Activated CD4-positive, alpha-beta T cell treated with anti-CD3 and anti-CD28 coated beads for 36 hours (primary cell): ENCODE measurements at regions of chr3 and their contacts with region 1.

Region 1: GRCh38 chr3:101573449-101574387 is at the start of gene PCNP:
- DNase-seq: peak; percentile 100
- ATAC-seq: peak; percentile 78
- H3K4me3 Mint-ChIP-seq: peak within 1 kb of the TSS; percentile 85
- H3K27ac Mint-ChIP-seq: peak within 1 kb of the TSS; percentile 94
- H3K4me1 Mint-ChIP-seq: peaks cover 60% of the 10 kb centered on the region
- H3K27me3 Mint-ChIP-seq: no peaks in the 10 kb centered on the region
- total RNA-seq, gene PCNP: 213 to 264 TPM

Region 2: GRCh38 chr3:100708967-100709841 is 864.5 kb before region 1 on chr3 and contains the start of gene TFG:
- CTCF ChIA-PET with region 1: no interaction called
- POLR2A ChIA-PET with region 1: interaction called, 3 read pairs
- intact Hi-C with region 1: loop called in 1 of 2 experiments (anchors 1 kb)
- DNase-seq: peak; percentile 98
- ATAC-seq: peak; percentile 91
- H3K4me3 Mint-ChIP-seq: peak within 1 kb of the TSS; percentile 79
- H3K27ac Mint-ChIP-seq: peak within 1 kb of the TSS; percentile 98
- H3K4me1 Mint-ChIP-seq: peaks cover 45% of the 10 kb centered on the region
- H3K27me3 Mint-ChIP-seq: no peaks in the 10 kb centered on the region
- total RNA-seq, gene TFG: 61.4 to 79.8 TPM

Region 3: DNA sequence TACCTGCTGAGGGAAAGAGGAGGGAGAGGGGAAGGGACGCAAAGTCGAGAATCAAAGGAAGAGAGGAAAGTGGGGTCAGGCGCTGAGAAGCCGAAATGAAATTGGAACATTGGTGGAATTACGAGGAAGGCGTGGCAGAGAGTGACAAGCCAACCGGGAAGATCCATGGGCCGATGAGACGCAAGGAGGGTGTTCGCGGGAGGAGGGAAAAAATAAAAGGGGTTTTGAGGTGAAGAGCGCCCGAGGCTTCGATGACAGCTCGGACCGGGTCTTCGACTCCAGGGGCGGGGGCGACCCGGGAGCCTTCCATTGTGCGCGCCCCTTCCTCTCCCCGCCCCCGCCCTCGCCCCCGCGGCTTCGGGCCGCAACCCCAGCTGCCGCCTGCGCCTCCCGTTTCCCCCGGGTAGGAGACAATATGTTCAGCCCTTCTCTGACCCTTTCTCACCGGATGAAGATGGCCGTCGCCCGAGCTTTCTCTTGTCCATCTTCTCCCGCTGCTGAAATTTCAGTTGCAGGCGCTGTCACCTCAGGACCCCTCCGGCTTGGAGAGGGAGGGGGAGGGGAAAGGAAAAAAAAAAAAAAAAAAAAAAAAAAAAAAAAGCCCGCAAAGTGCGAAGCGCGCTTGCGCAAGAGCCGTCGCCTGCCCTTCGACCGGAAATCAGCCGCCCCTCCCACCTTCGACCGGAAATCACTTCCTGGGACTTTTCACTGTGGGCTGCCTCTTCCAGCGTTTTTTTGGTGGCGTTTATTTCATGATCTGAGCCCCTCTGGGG is 60.9 kb before region 1 on chr3 and contains the start of gene SENP7:
- CTCF ChIA-PET with region 1: interaction called, 4 read pairs
- POLR2A ChIA-PET with region 1: interaction called, 6 read pairs
- intact Hi-C with region 1: loop called (anchors 1 kb)
- DNase-seq: peak; percentile 88
- ATAC-seq: peak; percentile 49
- H3K4me3 Mint-ChIP-seq: peak within 1 kb of the TSS; percentile 85
- H3K27ac Mint-ChIP-seq: peak within 1 kb of the TSS; percentile 96
- H3K4me1 Mint-ChIP-seq: peaks cover 53% of the 10 kb centered on the region
- H3K27me3 Mint-ChIP-seq: no peaks in the 10 kb centered on the region
- total RNA-seq, gene SENP7: 12.3 to 12.9 TPM

Region 4: DNA sequence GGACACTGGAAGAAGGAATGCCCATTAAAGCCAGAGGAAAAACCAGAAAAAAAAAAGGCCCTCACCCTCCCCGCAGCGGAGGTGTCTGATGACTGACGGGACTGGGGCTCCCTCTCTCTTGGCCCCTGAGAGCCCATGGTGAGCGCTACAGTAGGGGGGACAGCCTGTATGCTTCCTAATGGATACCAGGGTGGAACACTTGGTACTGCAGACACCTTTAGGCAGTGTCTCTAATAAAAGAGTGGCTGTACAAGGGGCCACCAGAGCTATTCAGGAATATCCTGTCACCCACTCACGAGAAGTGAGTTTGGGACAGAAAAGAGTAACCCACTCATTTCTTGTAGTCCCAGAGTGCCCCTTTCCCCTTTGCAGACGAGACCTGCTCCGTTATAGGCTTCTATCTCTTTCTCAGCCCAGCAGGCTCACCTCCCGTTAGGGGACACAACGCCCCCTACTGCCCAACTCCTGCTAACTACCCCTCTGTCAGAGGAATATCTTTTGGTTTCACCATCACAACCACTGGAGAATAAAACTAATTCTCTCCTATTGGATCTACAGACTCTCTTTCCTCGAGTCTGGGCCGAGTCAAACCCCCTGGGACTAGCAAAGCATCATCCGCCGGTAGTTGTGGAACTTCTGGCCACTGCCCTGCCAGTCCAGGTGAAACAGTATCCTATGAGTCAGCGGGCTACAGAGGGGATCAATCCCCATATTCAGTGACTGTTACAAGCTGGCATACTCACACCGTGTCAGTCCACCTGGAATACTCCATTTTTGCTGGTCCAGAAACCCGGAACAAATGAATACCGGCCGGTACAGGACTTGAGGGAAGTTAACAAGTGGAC is 62.5 kb after region 1 on chr3:
- CTCF ChIA-PET with region 1: interaction called, 5 read pairs
- POLR2A ChIA-PET with region 1: no interaction called
- intact Hi-C with region 1: loop called (anchors 1 kb)
- DNase-seq: peak; percentile 90
- ATAC-seq: peak; percentile 99
- H3K4me3 Mint-ChIP-seq: no peak overlapping the region
- H3K27ac Mint-ChIP-seq: peak overlapping the region; percentile 33
- H3K4me1 Mint-ChIP-seq: no peaks in the 10 kb centered on the region
- H3K27me3 Mint-ChIP-seq: no peaks in the 10 kb centered on the region

Region 5: DNA sequence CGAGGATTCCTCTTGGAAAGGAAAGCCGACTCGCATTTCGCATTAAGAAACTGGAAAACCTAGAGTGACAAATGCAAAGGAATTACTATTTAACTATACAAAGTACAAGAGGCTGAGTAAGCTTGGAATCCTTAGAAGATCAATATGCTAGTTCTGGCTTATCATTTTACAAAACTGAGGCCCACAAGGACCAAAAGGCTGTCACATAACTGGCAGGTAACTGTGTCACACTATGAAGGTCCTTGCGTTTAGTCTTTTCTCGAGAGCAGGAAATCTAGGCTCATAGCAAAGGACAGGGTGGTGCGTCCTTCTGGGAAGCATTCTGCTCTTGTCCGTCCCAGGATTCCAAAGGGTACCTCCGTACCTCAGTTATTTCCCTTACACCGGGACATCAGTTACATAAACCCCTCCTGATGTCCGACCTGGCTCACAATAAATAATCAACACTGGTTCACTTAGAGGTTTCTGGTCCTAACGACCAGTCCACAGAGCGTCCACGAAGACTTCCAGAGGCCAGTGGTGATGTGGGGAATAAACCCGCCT is 112.2 kb after region 1 on chr3:
- CTCF ChIA-PET with region 1: no interaction called
- POLR2A ChIA-PET with region 1: interaction called, 8 read pairs
- intact Hi-C with region 1: loop called in 1 of 2 experiments (anchors 1 kb)
- DNase-seq: no peak
- ATAC-seq: no peak
- H3K4me3 Mint-ChIP-seq: peak overlapping the region; percentile 100
- H3K27ac Mint-ChIP-seq: peak overlapping the region; percentile 99
- H3K4me1 Mint-ChIP-seq: peaks cover 45% of the 10 kb centered on the region
- H3K27me3 Mint-ChIP-seq: no peaks in the 10 kb centered on the region